Activated CD4-positive, alpha-beta T cell treated with anti-CD3 and anti-CD28 coated beads, Interleukin-2, amount 10 ng/mL, durations not matched to agents 24 days and 14 days (primary cell): ENCODE measurements at regions of chr12 and their contacts with region 1.

Region 1: DNA sequence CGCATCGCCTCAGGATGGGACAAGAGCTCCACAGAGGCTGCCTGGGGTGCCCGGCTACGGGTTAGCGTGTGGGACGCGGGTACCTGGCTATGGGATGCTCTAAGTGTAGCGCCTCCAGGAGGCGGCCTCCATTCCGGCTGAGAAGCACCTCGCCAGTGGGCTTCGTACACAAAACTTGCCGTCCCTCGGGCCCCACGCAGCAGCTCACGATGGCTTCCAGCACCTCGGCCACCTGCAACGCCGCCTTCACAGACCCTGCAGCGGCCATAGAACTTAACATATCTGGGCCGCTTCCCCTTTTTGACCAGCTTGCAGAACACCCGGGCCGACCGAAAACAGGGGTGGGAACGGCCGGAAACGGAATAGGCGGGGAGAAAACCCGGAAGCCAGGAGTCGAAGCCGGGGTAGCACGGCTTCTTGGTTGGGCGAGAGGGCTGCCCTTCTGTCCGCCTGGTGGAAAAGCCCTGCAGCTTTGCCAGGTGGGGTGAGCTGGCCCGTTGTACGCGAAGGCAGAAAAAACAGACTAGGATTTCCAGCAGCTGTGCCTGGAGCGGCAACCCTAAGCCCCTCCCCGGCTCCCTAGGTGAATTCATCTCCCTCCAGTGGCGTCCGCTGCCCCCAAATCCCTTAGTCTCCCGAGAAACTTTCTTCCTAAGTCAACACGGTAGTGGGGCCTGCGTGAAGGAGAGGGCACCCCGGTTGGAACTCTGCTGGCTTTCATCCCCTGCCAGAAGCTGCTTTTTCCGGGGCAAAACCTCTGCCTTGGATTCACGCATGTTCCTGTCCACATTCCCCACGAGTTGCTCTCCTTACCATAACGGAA is at the start of gene BBS10:
- DNase-seq: peak; percentile 96
- H3K4me3 Mint-ChIP-seq: peak within 1 kb of the TSS; percentile 97
- H3K27ac Mint-ChIP-seq: peak within 1 kb of the TSS; percentile 88
- H3K4me1 Mint-ChIP-seq: peaks cover 23% of the 10 kb centered on the region
- H3K27me3 Mint-ChIP-seq: no peaks in the 10 kb centered on the region
- total RNA-seq, gene BBS10: 3.8 and 4.7 TPM in 2 replicates

Region 2: GRCh38 chr12:75334384-75335030 is 1013.8 kb before region 1 on chr12 and contains the start of gene GLIPR1L1:
- intact Hi-C with region 1: loop called (anchors 5 kb)
- DNase-seq: peak; percentile 94
- H3K4me3 Mint-ChIP-seq: peak within 1 kb of the TSS; percentile 78
- H3K27ac Mint-ChIP-seq: no peak within 1 kb of the TSS
- H3K4me1 Mint-ChIP-seq: peaks cover 21% of the 10 kb centered on the region
- H3K27me3 Mint-ChIP-seq: peaks cover 48% of the 10 kb centered on the region
- total RNA-seq, gene GLIPR1L1: not detected in 2 replicates

Region 3: DNA sequence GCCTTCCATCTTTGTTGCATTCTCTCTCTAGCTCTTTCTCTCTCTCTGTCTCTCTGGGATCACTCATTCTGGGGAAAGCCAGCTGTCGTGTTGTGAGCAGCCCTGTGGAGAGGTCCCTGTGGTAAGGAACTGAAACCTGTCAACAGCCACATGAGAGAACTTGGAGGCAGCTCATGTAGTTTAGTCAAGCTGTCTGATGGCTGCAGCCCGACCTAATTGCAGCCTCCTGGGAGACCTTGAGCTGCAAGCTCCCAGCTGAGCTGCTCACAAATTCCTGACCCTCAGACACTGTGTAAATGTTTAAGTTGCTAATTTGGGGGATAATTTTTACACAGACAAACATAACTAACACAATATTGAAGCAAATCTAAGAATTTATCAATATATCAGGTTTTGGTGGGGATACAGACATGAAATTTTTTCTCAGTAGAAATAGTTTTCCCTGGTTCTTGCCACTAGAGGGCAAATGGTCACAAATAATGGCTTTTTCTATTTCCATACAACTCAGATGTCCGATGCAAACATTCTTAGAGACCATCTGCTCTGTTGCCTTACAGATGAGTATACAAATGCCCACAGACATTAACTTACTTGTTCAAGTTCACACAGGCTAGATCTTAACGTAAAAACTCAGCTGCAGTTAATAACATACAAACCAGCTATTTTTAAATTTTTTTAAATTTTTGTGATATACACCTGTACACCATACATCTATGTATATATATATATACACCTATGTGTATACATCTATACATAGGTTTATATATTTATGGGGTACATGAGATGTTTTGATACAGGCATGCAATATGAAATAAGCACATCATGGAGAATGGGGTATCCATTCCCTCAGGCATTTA is 821.4 kb before region 1 on chr12:
- intact Hi-C with region 1: loop called (anchors 5 kb)
- DNase-seq: peak; percentile 74
- H3K4me3 Mint-ChIP-seq: no peak overlapping the region
- H3K27ac Mint-ChIP-seq: peak overlapping the region; percentile 34
- H3K4me1 Mint-ChIP-seq: peaks cover 7% of the 10 kb centered on the region
- H3K27me3 Mint-ChIP-seq: peaks cover 34% of the 10 kb centered on the region

Region 4: DNA sequence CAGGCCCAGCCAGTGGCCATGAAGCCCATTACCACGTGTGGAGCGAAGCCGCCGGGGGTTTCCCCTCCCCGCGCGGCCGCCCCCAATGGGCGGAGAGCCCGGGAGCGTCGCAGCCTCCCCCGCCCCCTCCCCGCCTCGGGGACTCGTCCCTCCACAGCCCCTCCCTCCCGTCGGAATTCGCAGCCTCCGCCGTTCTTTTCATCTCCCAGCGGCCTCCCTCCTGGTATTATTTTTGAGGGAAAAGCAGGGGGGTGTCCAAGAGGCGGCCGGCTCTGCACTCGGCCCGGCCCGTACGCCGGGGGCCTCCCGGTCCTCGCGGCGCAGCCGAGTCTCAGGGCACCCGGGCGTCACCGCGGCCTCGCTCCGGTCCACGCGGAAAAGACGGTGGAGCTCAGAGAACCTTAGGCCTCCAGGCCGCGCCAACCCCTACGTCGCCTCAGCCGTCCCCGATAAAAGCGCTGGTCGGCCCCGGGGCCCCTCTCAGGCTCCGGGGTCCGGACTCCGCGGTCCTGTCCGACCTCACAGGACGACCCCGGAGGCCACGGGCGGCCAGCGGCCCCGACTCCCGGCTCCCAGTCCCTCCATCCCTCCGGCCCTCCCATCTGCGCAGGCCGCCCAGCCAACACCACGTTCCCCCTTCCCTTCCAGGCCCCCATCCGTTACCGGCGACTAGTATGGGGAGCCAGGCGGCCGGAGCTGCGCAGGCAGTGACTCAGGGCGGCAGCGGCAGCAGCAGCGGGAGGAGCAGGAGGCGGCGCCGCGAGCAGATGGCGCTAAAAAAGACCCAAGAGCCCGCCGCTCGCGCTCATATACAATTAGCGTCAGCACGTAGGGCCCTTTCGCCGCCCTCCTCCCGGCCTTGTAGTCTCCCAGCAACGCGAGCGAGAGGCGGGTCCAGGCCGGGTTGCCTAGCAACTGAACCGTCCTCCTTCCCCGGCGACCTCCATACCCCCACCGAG is 264.1 kb before region 1 on chr12 and contains the start of gene NAP1L1:
- intact Hi-C with region 1: loop called (anchors 1 kb)
- DNase-seq: peak; percentile 99
- H3K4me3 Mint-ChIP-seq: peak within 1 kb of the TSS; percentile 100
- H3K27ac Mint-ChIP-seq: peak within 1 kb of the TSS; percentile 100
- H3K4me1 Mint-ChIP-seq: peaks cover 42% of the 10 kb centered on the region
- H3K27me3 Mint-ChIP-seq: no peaks in the 10 kb centered on the region
- total RNA-seq, gene NAP1L1: 652 and 689 TPM in 2 replicates

Region 5: GRCh38 chr12:76274420-76275083 is 73.7 kb before region 1 on chr12:
- intact Hi-C with region 1: loop called (anchors 1 kb)
- DNase-seq: no peak
- H3K4me3 Mint-ChIP-seq: no peak overlapping the region
- H3K27ac Mint-ChIP-seq: peak overlapping the region; percentile 75
- H3K4me1 Mint-ChIP-seq: peaks cover 8% of the 10 kb centered on the region
- H3K27me3 Mint-ChIP-seq: peaks cover 4% of the 10 kb centered on the region

Region 6: DNA sequence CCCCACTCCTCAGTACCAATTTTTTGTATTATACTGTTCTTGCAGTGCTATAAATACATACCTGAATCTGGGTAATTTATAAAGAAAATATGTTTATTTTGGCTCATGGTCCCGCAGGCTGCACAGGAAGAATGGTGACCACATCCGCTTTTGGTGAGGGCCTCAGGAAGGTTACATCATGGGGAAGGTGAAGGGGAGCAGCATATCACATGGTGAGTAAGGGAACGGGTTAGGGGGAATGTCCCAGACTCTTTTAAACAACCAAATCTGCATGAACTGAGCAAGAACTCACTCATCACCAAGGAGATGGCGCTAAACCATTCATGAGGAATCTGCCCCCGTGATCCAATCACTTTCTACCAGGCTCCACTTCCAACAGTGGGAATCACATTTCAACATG is 171.2 kb after region 1 on chr12:
- intact Hi-C with region 1: no loop called
- DNase-seq: peak; percentile 62
- H3K4me3 Mint-ChIP-seq: no peak overlapping the region
- H3K27ac Mint-ChIP-seq: peak overlapping the region; percentile 56
- H3K4me1 Mint-ChIP-seq: peaks cover 27% of the 10 kb centered on the region
- H3K27me3 Mint-ChIP-seq: no peaks in the 10 kb centered on the region

Region 7: DNA sequence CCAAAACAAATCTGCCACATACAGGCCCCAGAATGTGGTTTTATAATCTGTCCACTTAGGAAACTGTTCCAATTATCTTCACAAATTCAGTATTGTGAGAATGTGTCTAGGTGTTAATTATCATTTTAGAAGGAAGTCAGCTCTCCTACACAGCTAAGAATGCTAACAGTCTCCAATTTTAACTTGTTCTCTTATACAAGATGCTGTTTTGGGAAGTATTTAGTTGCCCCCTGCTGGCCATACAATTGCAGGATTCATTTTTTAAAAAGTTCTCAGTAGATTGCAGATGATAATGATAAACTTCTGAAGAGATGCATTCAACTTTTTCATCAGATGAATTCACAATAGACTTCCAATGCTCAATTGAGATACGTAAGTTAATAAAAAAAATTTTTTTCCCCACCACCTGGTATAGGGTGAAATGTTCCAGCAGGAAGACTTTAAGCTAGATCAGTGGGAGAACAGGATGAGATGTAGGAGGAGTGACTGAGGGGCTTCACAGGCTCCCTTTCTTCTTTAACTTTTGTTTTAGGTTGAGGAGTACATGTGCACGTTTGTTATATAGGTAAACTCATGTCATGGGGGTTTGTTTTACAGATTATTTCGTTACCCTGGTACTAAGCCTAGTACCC is 238.6 kb after region 1 on chr12:
- intact Hi-C with region 1: loop called (anchors 10 kb)
- DNase-seq: peak; percentile 79
- H3K4me3 Mint-ChIP-seq: no peak overlapping the region
- H3K27ac Mint-ChIP-seq: peak overlapping the region; percentile 18
- H3K4me1 Mint-ChIP-seq: peaks cover 11% of the 10 kb centered on the region
- H3K27me3 Mint-ChIP-seq: no peaks in the 10 kb centered on the region